H1 (cell line): ENCODE measurements at regions of chr11 and their contacts with region 1.

Region 1: DNA sequence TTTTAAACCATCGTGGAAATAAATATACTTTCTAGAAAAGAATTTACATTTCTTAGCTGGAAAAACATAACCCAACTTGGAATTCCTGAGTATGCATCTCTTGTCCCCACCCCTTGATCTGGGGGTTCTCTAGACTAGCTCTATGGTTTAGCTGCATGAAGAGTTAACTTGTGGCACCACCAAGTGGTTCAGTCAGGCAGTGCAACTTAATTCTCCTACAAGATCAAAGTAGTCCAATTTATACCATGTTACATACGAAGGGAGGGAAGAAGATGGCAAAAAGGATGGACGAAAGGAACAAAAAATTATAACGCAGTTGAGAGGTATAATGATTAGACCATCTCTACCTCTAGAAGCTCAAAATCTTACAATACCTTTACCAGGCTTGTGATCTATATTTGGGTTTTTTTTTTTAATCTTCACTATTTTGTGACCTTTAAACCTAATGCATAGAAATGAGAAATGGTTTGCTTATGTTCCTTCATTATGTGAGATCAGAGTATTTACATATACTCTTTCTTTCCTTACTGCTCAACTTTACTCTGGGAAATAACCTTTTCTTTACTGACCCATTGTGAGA is 28.5 kb upstream of the ALKBH3 start:
- DNase-seq: peak; percentile 34 to 79
- H3K4me3 ChIP-seq: no peak overlapping the region
- H3K27ac ChIP-seq: no peak overlapping the region
- H3K4me1 ChIP-seq: peaks cover 0 to 5% (median 1%) of the 10 kb centered on the region in 4 experiments; a peak in 1 of 7 replicates
- H3K27me3 ChIP-seq: no peaks in the 10 kb centered on the region
- CTCF ChIP-seq: peak in 2 of 3 experiments; percentile 71 to 83; a peak in 3 of 4 replicates
- EP300 ChIP-seq: no peak
- POLR2A ChIP-seq: no peak
- RAD21 ChIP-seq: peak; percentile 91

Region 2: GRCh38 chr11:43825217-43825816 is 26.8 kb before region 1 on chr11:
- CTCF ChIA-PET with region 1: interaction called, 50 read pairs
- POLR2A ChIA-PET with region 1: no interaction called
- DNase-seq: no peak
- H3K4me3 ChIP-seq: no peak overlapping the region
- H3K27ac ChIP-seq: no peak overlapping the region
- H3K4me1 ChIP-seq: no peaks in the 10 kb centered on the region
- H3K27me3 ChIP-seq: peaks cover 0 to 1% (median 0%) of the 10 kb centered on the region in 4 experiments; a peak in 1 of 7 replicates
- CTCF ChIP-seq: peak in 2 of 3 experiments; percentile 49 to 66; a peak in 3 of 4 replicates
- EP300 ChIP-seq: no peak
- POLR2A ChIP-seq: no peak
- RAD21 ChIP-seq: peak; percentile 41 to 53

Region 3: GRCh38 chr11:43830928-43831440 is 21.2 kb before region 1 on chr11:
- CTCF ChIA-PET with region 1: interaction called, 50 read pairs
- POLR2A ChIA-PET with region 1: interaction called, 4 read pairs
- DNase-seq: peak in 1 of 2 experiments; percentile 7
- H3K4me3 ChIP-seq: no peak overlapping the region
- H3K27ac ChIP-seq: no peak overlapping the region; the same call in 1 of the 2 replicates
- H3K4me1 ChIP-seq: no peaks in the 10 kb centered on the region
- H3K27me3 ChIP-seq: no peaks in the 10 kb centered on the region
- CTCF ChIP-seq: no peak
- EP300 ChIP-seq: no peak
- POLR2A ChIP-seq: no peak
- RAD21 ChIP-seq: no peak

Region 4: DNA sequence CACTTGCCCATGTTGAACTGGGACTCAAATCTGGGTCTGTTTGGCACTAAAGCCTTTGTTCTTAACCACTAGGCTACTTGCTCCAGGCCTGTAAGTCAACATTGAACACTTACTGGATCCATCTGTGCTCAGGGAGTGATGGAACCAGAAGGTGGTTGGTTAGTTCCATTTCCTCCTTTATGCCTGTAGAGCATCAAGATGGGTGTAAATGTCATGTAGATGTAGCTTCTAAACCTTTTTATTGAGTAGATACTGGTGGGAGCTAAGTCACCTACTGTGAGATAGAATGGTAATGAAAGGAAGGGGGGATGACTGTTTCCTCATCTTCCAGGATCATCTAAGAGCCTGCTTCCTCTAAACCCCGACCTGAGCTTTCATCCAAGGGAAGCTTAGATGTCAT is 10.1 kb before region 1 on chr11:
- CTCF ChIA-PET with region 1: interaction called, 19 read pairs
- POLR2A ChIA-PET with region 1: no interaction called
- DNase-seq: no peak
- H3K4me3 ChIP-seq: no peak overlapping the region
- H3K27ac ChIP-seq: no peak overlapping the region
- H3K4me1 ChIP-seq: peaks cover 0 to 2% (median 0%) of the 10 kb centered on the region in 4 experiments; a peak in 1 of 7 replicates
- H3K27me3 ChIP-seq: no peaks in the 10 kb centered on the region
- CTCF ChIP-seq: no peak
- EP300 ChIP-seq: no peak
- POLR2A ChIP-seq: no peak
- RAD21 ChIP-seq: no peak

Region 5: GRCh38 chr11:43868852-43869567 is 16.9 kb after region 1 on chr11:
- CTCF ChIA-PET with region 1: interaction called, 13 read pairs
- POLR2A ChIA-PET with region 1: no interaction called
- DNase-seq: no peak
- H3K4me3 ChIP-seq: no peak overlapping the region
- H3K27ac ChIP-seq: no peak overlapping the region
- H3K4me1 ChIP-seq: no peaks in the 10 kb centered on the region
- H3K27me3 ChIP-seq: peaks cover under 1 to 2% (median 2%) of the 10 kb centered on the region in 4 experiments; a peak in 3 of 7 replicates
- CTCF ChIP-seq: no peak
- EP300 ChIP-seq: no peak
- POLR2A ChIP-seq: no peak
- RAD21 ChIP-seq: no peak